Naive thymus-derived CD4-positive, alpha-beta T cell (primary cell): ENCODE measurements at regions of chrX and their contacts with region 1.

Region 1: DNA sequence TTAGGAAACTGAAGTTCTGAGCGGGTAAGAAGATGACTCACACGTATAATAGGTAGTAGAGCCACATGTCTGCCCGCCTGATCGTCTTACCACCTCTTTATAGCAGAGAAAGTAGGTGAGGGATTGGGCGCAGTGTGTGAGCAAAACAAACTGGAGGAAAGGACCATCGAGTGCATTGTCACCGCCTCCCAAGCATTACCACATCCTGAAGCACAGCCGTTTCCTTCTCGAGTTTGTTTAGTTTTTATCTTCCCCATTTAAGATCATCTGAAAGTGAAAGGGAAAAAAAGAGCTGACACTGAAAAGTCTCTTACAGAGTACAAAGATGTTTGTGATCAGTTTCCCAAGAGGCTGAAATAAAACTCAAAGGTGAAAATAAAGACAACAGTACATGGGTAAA is 14.8 kb downstream of the PDK3 start:
- DNase-seq: peak in 8 of 9 donors; percentile 46 to 88 (median 82)
- ATAC-seq: peak; percentile 98
- H3K4me3 ChIP-seq: peak overlapping the region; percentile 34
- H3K4me3 Mint-ChIP-seq: peak overlapping the region; percentile 65 to 85 (median 76)
- H3K27ac ChIP-seq: peak overlapping the region; percentile 81
- H3K27ac Mint-ChIP-seq: peak overlapping the region; percentile 91 to 97 (median 95)
- H3K4me1 ChIP-seq: peaks cover 22 to 51% of the 10 kb centered on the region in 2 donors
- H3K4me1 Mint-ChIP-seq: peaks cover 16 to 92% (median 71%) of the 10 kb centered on the region in 7 donors
- H3K27me3 ChIP-seq: no peaks in the 10 kb centered on the region
- H3K27me3 Mint-ChIP-seq: no peaks in the 10 kb centered on the region

Region 2: DNA sequence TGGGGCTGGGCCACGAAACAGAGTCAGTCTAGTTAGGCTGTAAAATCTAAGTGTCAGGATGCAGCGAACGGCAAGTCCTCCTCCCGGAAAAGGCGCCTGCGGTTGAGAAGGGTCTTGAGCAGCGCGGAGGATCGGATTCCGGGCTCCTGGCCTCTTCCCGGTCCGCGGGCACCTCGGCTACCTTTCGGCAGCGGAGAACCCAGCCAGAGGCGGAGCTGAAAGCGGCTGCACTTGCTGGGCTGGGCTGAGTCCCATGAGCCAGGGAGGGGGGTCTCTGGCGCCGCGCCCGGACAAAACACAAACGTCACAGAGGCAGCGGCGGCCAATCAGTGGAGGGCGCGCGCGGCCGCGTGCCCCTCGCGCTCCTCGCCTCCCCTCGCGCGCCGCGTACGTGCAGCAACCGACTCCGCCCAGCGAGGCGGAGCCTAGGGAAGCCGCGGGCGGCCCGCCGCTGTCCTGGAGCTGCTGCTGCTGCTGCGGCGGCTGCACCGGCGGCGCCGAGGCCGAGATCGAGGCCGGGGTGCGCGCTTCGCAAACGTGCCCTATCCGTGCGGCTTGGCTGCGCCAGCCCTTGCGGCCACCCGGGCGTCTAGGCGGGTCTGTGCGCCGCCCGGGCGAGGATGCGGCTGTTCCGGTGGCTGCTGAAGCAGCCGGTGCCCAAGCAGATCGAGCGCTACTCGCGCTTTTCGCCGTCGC is 14.9 kb before region 1 on chrX and contains the start of gene PDK3:
- CTCF ChIA-PET with region 1: interaction called, 3 read pairs
- POLR2A ChIA-PET with region 1: interaction called, 110 read pairs
- intact Hi-C with region 1: loop called (anchors 1 kb)
- DNase-seq: peak; percentile 81 to 92 (median 89)
- ATAC-seq: peak; percentile 98
- H3K4me3 ChIP-seq: peak within 1 kb of the TSS; percentile 70
- H3K4me3 Mint-ChIP-seq: peak within 1 kb of the TSS; percentile 48 to 90 (median 85)
- H3K27ac ChIP-seq: peak within 1 kb of the TSS; percentile 92
- H3K27ac Mint-ChIP-seq: peak within 1 kb of the TSS; percentile 77 to 97 (median 93)
- H3K4me1 ChIP-seq: peaks cover 14 to 24% of the 10 kb centered on the region in 2 donors
- H3K4me1 Mint-ChIP-seq: peaks cover 7 to 37% (median 33%) of the 10 kb centered on the region in 7 donors
- H3K27me3 ChIP-seq: no peaks in the 10 kb centered on the region
- H3K27me3 Mint-ChIP-seq: no peaks in the 10 kb centered on the region
- total RNA-seq, gene PDK3: 17.4 to 29.4 (median 28.5) TPM

Region 3: DNA sequence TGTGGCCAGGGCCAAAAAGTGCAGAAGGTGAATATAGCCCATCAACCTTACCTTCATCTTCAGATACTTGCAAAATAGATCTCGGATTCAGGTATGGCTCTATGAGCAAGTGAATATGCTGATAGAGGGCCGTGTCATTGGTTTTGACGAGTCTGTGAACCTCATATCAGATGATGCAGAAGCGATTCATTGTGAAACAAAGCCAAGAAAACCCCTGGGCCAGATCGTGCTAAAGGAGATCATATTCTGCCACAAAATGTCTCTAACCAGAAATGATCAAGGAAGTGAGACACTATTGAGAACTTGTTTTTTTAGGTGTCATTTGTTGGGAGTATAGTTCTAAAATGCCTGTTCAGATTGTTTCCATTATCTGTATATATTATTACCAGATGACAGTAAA is 33.5 kb after region 1 on chrX:
- CTCF ChIA-PET with region 1: no interaction called
- POLR2A ChIA-PET with region 1: interaction called, 3 read pairs
- intact Hi-C with region 1: loop called in 1 of 2 experiments (anchors 1 kb)
- DNase-seq: peak in 1 of 9 donors; percentile 24
- ATAC-seq: no peak
- H3K4me3 ChIP-seq: no peak overlapping the region
- H3K4me3 Mint-ChIP-seq: peak overlapping the region in 1 of 10 donors; percentile 48
- H3K27ac ChIP-seq: no peak overlapping the region
- H3K27ac Mint-ChIP-seq: peak overlapping the region in 1 of 9 donors; percentile 80
- H3K4me1 ChIP-seq: no peaks in the 10 kb centered on the region
- H3K4me1 Mint-ChIP-seq: peaks cover 0 to 12% (median 0%) of the 10 kb centered on the region in 7 donors
- H3K27me3 ChIP-seq: no peaks in the 10 kb centered on the region
- H3K27me3 Mint-ChIP-seq: no peaks in the 10 kb centered on the region

Region 4: GRCh38 chrX:25166546-25166945 is 686.6 kb after region 1 on chrX:
- CTCF ChIA-PET with region 1: no interaction called
- POLR2A ChIA-PET with region 1: no interaction called
- intact Hi-C with region 1: no loop called
- DNase-seq: no peak
- ATAC-seq: no peak
- H3K4me3 ChIP-seq: no peak overlapping the region
- H3K4me3 Mint-ChIP-seq: no peak overlapping the region
- H3K27ac ChIP-seq: no peak overlapping the region
- H3K27ac Mint-ChIP-seq: no peak overlapping the region
- H3K4me1 ChIP-seq: no peaks in the 10 kb centered on the region
- H3K4me1 Mint-ChIP-seq: no peaks in the 10 kb centered on the region
- H3K27me3 ChIP-seq: no peaks in the 10 kb centered on the region
- H3K27me3 Mint-ChIP-seq: peaks cover 0 to 16% (median 6%) of the 10 kb centered on the region in 5 donors